Caco-2 (cell line): ENCODE measurements at regions of chr5 and their contacts with region 1.

Region 1: GRCh38 chr5:89729623-89730301 is 679.8 kb downstream of the CETN3 start:
- DNase-seq: peak in 1 of 2 experiments; percentile 3
- H3K4me3 ChIP-seq: no peak overlapping the region
- H3K4me3 Mint-ChIP-seq: no peak overlapping the region
- H3K27ac Mint-ChIP-seq: no peak overlapping the region
- H3K4me1 ChIP-seq: no peaks in the 10 kb centered on the region
- H3K4me1 Mint-ChIP-seq: no peaks in the 10 kb centered on the region
- H3K27me3 ChIP-seq: no peaks in the 10 kb centered on the region
- H3K27me3 Mint-ChIP-seq: peaks cover 6% of the 10 kb centered on the region
- CTCF ChIP-seq: peak; percentile 32 to 35

Region 2: GRCh38 chr5:89260254-89260653 is 469.5 kb before region 1 on chr5:
- CTCF ChIA-PET with region 1: no interaction called
- POLR2A ChIA-PET with region 1: no interaction called
- intact Hi-C with region 1: loop called (anchors 5 kb)
- DNase-seq: no peak
- H3K4me3 ChIP-seq: no peak overlapping the region
- H3K4me3 Mint-ChIP-seq: no peak overlapping the region
- H3K27ac Mint-ChIP-seq: no peak overlapping the region
- H3K4me1 ChIP-seq: no peaks in the 10 kb centered on the region
- H3K4me1 Mint-ChIP-seq: no peaks in the 10 kb centered on the region
- H3K27me3 ChIP-seq: no peaks in the 10 kb centered on the region
- H3K27me3 Mint-ChIP-seq: peaks cover 3% of the 10 kb centered on the region
- CTCF ChIP-seq: no peak

Region 3: DNA sequence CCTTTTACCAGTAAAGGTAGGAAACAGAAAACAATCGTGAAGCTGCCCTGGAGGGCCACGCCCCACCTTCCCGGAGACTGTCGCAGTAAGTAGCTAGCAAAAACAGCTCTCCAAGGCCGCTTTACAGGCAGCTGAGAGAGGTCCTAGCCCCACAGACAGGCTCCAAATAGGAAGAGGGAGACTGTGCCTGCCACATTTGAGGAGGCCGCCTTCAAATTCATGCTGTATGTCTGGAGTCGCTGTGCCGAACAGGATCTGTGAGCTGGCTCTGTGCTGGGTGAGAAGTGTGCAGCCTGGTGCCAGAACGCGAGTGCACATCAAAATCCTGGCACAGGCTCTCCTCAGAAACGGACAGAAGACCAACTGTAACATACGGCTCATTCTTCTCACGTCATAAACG is 97.6 kb after region 1 on chr5:
- CTCF ChIA-PET with region 1: no interaction called
- POLR2A ChIA-PET with region 1: no interaction called
- intact Hi-C with region 1: no loop called
- DNase-seq: no peak
- H3K4me3 ChIP-seq: no peak overlapping the region
- H3K4me3 Mint-ChIP-seq: no peak overlapping the region
- H3K27ac Mint-ChIP-seq: no peak overlapping the region
- H3K4me1 ChIP-seq: no peaks in the 10 kb centered on the region
- H3K4me1 Mint-ChIP-seq: no peaks in the 10 kb centered on the region
- H3K27me3 ChIP-seq: no peaks in the 10 kb centered on the region
- H3K27me3 Mint-ChIP-seq: no peaks in the 10 kb centered on the region
- CTCF ChIP-seq: no peak